CD14-positive monocyte (primary cell): ENCODE measurements at regions of chr15 and their contacts with region 1.

Region 1: DNA sequence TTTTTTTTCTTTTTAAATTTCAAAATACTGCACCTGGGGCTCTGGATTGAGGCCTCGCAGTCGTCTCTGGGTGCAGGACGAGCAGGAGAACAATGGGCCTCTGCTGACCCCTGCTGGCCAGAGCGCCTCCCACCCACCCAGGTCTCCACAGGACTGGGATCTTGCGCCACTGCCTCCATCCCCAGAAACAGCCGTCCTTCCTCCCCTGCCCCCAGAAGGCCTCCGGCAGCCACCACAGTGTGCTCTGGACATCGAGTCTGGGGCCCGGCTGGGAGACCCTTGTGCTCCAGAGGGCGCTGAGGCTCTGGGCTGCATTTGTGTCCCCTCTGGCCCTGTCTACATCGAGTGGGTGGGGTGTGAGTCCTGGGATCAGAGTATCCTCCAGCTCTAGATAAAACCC is 6.6 kb upstream of the ACSBG1 start:
- DNase-seq: peak; percentile 63 to 69 (median 67)
- H3K4me3 ChIP-seq: no peak overlapping the region
- H3K4me3 Mint-ChIP-seq: no peak overlapping the region
- H3K27ac ChIP-seq: no peak overlapping the region
- H3K27ac Mint-ChIP-seq: no peak overlapping the region
- H3K4me1 ChIP-seq: peaks cover 5% of the 10 kb centered on the region in 2 donors
- H3K4me1 Mint-ChIP-seq: peaks cover 2% of the 10 kb centered on the region
- H3K27me3 ChIP-seq: no peaks in the 10 kb centered on the region
- H3K27me3 Mint-ChIP-seq: peaks cover 0 to 2% (median 1%) of the 10 kb centered on the region in 3 donors
- CTCF ChIP-seq: peak; percentile 83

Region 2: GRCh38 chr15:77959432-77959879 is 281.6 kb before region 1 on chr15:
- intact Hi-C with region 1: loop called (anchors 5 kb)
- DNase-seq: peak; percentile 51 to 65 (median 64)
- H3K4me3 ChIP-seq: peak overlapping the region in 1 of 3 experiments; percentile 41
- H3K4me3 Mint-ChIP-seq: peak overlapping the region; percentile 70 to 80
- H3K27ac ChIP-seq: no peak overlapping the region
- H3K27ac Mint-ChIP-seq: no peak overlapping the region
- H3K4me1 ChIP-seq: peaks cover 0 to 7% of the 10 kb centered on the region in 2 donors
- H3K4me1 Mint-ChIP-seq: peaks cover 9% of the 10 kb centered on the region
- H3K27me3 ChIP-seq: peaks cover 0 to 2% of the 10 kb centered on the region in 2 donors
- H3K27me3 Mint-ChIP-seq: peaks cover 0 to 9% (median 8%) of the 10 kb centered on the region in 3 donors
- CTCF ChIP-seq: peak; percentile 95

Region 3: GRCh38 chr15:78131295-78132061 is 109.5 kb before region 1 on chr15 and contains the start of gene CIB2:
- intact Hi-C with region 1: loop called (anchors 5 kb)
- DNase-seq: peak; percentile 29 to 58 (median 55)
- H3K4me3 ChIP-seq: peak within 1 kb of the TSS; percentile 74 to 84 (median 79)
- H3K4me3 Mint-ChIP-seq: peak within 1 kb of the TSS; percentile 85 to 89
- H3K27ac ChIP-seq: peak within 1 kb of the TSS in 1 of 2 donors; percentile 73
- H3K27ac Mint-ChIP-seq: peak within 1 kb of the TSS in 5 of 7 donors; percentile 23 to 75 (median 72)
- H3K4me1 ChIP-seq: peaks cover 9 to 20% of the 10 kb centered on the region in 2 donors
- H3K4me1 Mint-ChIP-seq: peaks cover 26% of the 10 kb centered on the region
- H3K27me3 ChIP-seq: peaks cover 0 to 8% of the 10 kb centered on the region in 2 donors
- H3K27me3 Mint-ChIP-seq: peaks cover 10 to 14% (median 12%) of the 10 kb centered on the region in 3 donors
- CTCF ChIP-seq: peak; percentile 94
- polyA plus RNA-seq, gene CIB2: 0.43 to 0.75 (median 0.51) TPM

Region 4: DNA sequence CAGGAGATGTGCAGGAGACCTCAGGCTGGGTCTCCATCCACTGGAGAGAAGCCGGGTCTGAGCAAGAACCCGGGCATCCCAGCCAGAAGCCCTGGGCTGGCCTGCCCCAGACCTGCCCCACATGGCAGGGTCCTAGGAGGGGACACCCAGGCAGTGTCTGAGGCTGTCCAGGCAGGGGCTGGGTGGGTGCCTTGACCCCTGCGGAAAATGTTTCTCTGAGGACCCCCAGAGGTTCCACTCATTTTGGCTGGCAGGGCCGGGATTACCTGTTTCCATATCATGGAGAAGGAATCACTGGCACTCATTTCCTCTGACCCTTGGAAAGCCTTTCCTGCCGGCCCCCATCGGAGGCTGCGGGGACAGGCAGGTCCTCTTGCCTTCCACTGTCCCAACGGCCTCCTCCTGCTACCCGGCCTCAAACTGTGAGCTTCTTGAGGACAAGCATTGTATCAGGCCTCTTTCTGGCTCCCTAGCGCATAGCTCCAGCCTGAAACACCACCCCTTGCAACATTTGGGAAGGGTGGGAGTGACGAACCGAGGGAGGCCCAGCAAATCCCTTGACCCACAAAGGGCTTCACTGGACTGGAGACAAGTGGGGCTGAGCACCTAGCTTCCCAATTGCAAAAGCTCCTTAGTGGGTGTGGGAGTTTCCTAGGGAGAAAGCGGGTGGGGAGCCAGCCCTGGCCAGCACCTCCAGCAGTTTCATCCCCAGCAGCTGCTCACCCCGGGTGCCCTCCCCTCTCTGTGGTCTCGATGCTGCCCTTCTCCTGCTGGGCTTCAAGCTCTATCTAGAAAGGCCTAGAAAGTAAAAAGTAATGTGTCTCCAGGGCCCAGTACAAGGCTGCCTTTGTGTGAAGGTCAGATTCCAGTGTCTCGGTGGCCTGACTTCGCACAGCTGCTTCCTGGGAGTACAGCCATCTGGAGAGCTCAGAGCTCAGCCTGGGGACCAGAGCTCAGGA is 36.4 kb before region 1 on chr15:
- intact Hi-C with region 1: no loop called
- DNase-seq: no peak
- H3K4me3 ChIP-seq: no peak overlapping the region
- H3K4me3 Mint-ChIP-seq: no peak overlapping the region
- H3K27ac ChIP-seq: no peak overlapping the region
- H3K27ac Mint-ChIP-seq: no peak overlapping the region
- H3K4me1 ChIP-seq: no peaks in the 10 kb centered on the region
- H3K4me1 Mint-ChIP-seq: no peaks in the 10 kb centered on the region
- H3K27me3 ChIP-seq: no peaks in the 10 kb centered on the region
- H3K27me3 Mint-ChIP-seq: peaks cover 0 to 8% (median 8%) of the 10 kb centered on the region in 3 donors
- CTCF ChIP-seq: no peak